ENCODE measurements at regions of chr19 and their contacts with region 1.

Region 1: DNA sequence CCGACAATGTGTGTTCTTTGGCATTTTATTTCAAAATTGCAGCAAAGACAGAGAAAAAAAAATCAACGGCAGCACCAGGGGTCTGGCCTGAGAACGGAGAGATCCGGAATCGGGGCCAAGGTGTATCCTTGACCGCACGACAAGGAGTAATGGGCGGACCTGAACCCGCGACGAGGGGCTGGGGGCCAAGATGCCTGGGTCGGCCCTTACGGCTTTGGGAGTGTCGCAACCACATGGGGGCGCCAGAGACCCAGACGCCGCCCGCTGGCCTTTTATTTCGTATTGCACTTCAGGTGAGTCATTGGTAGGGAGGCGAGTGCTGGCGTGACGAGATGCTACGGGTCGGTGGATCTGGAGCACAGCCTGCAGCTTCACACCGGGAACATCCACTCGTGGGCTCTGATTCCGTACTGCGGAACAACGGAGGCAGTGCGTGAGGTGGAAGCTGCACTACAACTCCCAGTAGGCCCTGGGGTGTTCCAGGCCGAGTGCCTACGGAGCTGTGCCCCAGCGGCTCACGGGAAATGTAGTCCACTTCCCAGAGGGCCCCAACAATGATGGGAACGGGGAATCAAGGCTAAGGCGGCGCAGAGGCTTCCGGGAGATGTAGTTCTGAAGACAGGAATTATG is 15.7 kb downstream of the BCAT2 start:
- DNase-seq: peak; percentile 88
- H3K4me3 ChIP-seq: peak overlapping the region; percentile 17 to 53 (median 38)
- H3K27ac ChIP-seq: peak overlapping the region; percentile 31
- H3K4me1 ChIP-seq: peaks cover 24% of the 10 kb centered on the region
- H3K27me3 ChIP-seq: no peaks in the 10 kb centered on the region
- CTCF ChIP-seq: peak; percentile 77 to 97

Region 2: GRCh38 chr19:48363810-48364563 is 431.2 kb before region 1 on chr19 and contains the starts of genes SYNGR4 and TMEM143:
- CTCF ChIA-PET with region 1: no interaction called
- dilution Hi-C with region 1: loop called (anchors 10 kb)
- in situ Hi-C with region 1: no loop called
- intact Hi-C with region 1: no loop called
- DNase-seq: peak; percentile 99
- H3K4me3 ChIP-seq: peak within 1 kb of the TSS; percentile 41 to 58 (median 50)
- H3K27ac ChIP-seq: peak within 1 kb of the TSS; percentile 79
- H3K4me1 ChIP-seq: peaks cover 8% of the 10 kb centered on the region
- H3K27me3 ChIP-seq: no peaks in the 10 kb centered on the region
- CTCF ChIP-seq: no peak
- total RNA-seq, gene SYNGR4: not detected
- total RNA-seq, gene TMEM143: 4.5 to 9.0 TPM

Region 3: DNA sequence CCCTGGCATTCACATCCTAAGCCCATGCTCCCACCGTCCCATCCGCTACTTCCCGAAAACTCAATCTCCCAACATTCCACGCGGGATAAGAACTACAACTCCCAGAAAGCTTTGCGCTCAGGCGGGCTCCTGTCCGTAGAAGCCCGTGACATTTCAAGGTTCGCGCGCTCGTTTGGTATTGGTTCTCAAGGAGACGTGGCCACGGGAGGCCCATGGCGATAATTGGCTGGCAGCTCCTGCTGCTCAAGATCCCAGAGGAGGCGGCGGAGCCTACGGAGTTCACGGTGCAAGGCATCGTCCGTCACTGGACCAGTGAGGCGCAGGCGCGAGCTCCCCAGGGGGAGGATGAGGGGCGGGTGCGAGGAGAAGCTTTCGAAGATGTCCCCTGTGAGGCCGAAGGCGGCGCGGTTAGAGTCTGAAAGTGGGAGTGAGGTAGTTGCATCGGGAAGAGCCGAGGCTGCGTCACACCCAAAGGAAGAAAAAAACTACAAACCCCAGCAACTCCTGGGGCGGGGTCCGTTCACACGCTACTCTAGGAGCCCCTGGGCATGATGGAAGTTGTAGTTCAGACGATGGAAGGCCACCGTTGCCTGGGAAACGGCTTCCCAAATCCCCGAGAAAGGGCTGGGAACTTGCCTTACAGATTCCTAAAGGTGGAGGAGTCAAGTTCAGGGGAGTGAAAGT is 74.4 kb before region 1 on chr19:
- CTCF ChIA-PET with region 1: no interaction called
- dilution Hi-C with region 1: loop called (anchors 5 kb)
- in situ Hi-C with region 1: no loop called
- intact Hi-C with region 1: no loop called
- DNase-seq: peak; percentile 98
- H3K4me3 ChIP-seq: peak overlapping the region; percentile 61 to 81 (median 61)
- H3K27ac ChIP-seq: peak overlapping the region; percentile 68
- H3K4me1 ChIP-seq: peaks cover 16% of the 10 kb centered on the region
- H3K27me3 ChIP-seq: no peaks in the 10 kb centered on the region
- CTCF ChIP-seq: no peak

Region 4: GRCh38 chr19:48760504-48761205 is 34.5 kb before region 1 on chr19:
- CTCF ChIA-PET with region 1: no interaction called
- dilution Hi-C with region 1: no loop called
- in situ Hi-C with region 1: no loop called
- intact Hi-C with region 1: no loop called
- DNase-seq: no peak
- H3K4me3 ChIP-seq: no peak overlapping the region
- H3K27ac ChIP-seq: no peak overlapping the region
- H3K4me1 ChIP-seq: no peaks in the 10 kb centered on the region
- H3K27me3 ChIP-seq: peaks cover 2% of the 10 kb centered on the region
- CTCF ChIP-seq: no peak

Region 5: DNA sequence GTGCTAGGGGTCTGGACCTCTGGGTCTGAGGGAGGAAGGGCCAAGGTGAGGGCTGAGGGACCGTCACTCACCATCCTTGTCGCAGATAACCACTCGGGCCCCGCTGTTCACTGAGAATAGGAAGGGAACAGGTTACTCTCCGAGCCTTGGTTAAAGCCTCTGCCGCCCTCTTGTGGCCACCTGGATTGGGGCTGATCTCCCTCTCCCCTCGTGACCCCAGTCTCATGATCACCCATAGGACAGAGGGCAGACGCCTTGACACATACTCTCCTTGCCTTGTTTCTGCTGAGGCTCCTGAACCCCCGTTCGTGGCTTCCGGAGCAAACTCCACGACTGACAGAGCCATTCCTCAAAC is 40.5 kb after region 1 on chr19:
- CTCF ChIA-PET with region 1: interaction called, 3 read pairs
- dilution Hi-C with region 1: loop called (anchors 5 kb)
- in situ Hi-C with region 1: loop called (anchors 5 kb)
- intact Hi-C with region 1: loop called (anchors 1 kb)
- DNase-seq: peak; percentile 76
- H3K4me3 ChIP-seq: peak overlapping the region in 1 of 3 experiments; percentile 24
- H3K27ac ChIP-seq: no peak overlapping the region
- H3K4me1 ChIP-seq: peaks cover 5% of the 10 kb centered on the region
- H3K27me3 ChIP-seq: no peaks in the 10 kb centered on the region
- CTCF ChIP-seq: peak; percentile 92 to 95

Region 6: DNA sequence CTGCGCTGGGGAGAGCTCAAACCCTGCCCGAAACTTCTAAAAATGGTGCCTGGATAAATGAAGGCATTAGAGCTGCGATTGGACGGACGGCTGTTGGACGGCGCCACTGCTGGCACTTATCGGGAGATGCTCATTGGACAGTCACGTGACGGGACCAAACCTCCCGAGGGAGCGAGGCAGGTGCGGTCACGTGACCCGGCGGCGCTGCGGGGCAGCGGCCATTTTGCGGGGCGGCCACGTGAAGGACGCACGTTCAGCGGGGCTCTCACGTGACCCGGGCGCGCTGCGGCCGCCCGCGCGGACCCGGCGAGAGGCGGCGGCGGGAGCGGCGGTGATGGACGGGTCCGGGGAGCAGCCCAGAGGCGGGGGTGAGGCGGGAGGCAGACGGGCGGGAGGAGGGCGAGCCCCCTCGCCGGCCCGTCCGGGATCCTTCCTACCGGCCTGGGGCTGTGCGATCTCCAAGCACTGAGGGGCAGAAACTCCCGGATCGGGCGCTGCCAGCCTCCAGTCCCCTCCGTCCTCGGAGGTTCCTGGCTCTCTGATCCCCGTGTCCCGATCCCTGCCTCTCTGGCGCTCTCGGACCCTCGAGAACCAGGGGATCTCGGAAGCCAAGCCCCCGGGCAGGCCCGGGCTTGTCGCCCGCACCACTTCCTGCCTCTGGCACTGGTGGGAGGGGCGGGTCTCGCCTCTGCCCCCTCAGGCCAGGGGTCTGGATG is 159.6 kb after region 1 on chr19 and contains the start of gene BAX:
- CTCF ChIA-PET with region 1: no interaction called
- dilution Hi-C with region 1: no loop called
- in situ Hi-C with region 1: loop called in 1 of 2 experiments (anchors 25 kb)
- intact Hi-C with region 1: no loop called
- DNase-seq: peak; percentile 94
- H3K4me3 ChIP-seq: peak within 1 kb of the TSS; percentile 57 to 91 (median 70)
- H3K27ac ChIP-seq: peak within 1 kb of the TSS; percentile 63
- H3K4me1 ChIP-seq: peaks cover 14% of the 10 kb centered on the region
- H3K27me3 ChIP-seq: no peaks in the 10 kb centered on the region
- CTCF ChIP-seq: no peak
- total RNA-seq, gene BAX: 53.7 to 180 TPM

Region 7: DNA sequence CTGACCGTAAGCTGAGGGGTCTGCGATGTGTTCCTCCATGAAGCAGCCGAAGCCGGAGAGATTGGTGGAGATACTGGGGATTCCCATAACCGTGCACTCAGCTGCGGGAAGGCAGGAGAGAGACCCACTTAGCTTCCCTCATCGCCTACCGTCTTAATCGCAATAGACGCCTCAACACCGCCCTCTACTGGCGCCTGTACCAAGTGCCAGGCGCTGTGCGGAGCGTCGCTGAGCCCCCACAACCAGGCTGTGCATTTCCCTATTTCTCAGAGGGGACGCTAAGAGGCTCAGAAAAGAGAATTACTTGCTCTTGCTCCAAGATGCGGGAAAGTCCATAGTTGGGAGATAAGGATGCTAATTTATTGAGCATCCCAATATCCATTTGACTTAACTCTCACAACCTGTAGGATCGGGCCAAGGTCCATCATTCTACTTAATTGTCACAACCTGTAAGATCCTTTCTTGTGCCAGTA is 175.8 kb after region 1 on chr19:
- CTCF ChIA-PET with region 1: interaction called, 5 read pairs
- dilution Hi-C with region 1: loop called (anchors 5 kb)
- in situ Hi-C with region 1: loop called in 1 of 2 experiments (anchors 25 kb)
- intact Hi-C with region 1: loop called (anchors 1 kb)
- DNase-seq: no peak
- H3K4me3 ChIP-seq: no peak overlapping the region
- H3K27ac ChIP-seq: no peak overlapping the region
- H3K4me1 ChIP-seq: peaks cover 5% of the 10 kb centered on the region
- H3K27me3 ChIP-seq: no peaks in the 10 kb centered on the region
- CTCF ChIP-seq: peak; percentile 92 to 93

Measured in mammary epithelial cell (primary cell).